Esophagus muscularis mucosa (tissue), 4 donors: ENCODE measurements at regions of chr16 and their contacts with region 1.

Region 1: GRCh38 chr16:68237243-68238028 is 1.5 kb upstream of the ESRP2 start:
- DNase-seq: peak; percentile 100
- H3K4me3 ChIP-seq: peak overlapping the region; percentile 61 to 75 (median 68)
- H3K27ac ChIP-seq: peak overlapping the region; percentile 85 to 89 (median 86)
- H3K4me1 ChIP-seq: peaks cover 24 to 55% (median 36%) of the 10 kb centered on the region in 4 donors
- H3K27me3 ChIP-seq: no peaks in the 10 kb centered on the region
- CTCF ChIP-seq: no peak
- EP300 ChIP-seq: no peak
- POLR2A ChIP-seq: peak; percentile 52

Region 2: DNA sequence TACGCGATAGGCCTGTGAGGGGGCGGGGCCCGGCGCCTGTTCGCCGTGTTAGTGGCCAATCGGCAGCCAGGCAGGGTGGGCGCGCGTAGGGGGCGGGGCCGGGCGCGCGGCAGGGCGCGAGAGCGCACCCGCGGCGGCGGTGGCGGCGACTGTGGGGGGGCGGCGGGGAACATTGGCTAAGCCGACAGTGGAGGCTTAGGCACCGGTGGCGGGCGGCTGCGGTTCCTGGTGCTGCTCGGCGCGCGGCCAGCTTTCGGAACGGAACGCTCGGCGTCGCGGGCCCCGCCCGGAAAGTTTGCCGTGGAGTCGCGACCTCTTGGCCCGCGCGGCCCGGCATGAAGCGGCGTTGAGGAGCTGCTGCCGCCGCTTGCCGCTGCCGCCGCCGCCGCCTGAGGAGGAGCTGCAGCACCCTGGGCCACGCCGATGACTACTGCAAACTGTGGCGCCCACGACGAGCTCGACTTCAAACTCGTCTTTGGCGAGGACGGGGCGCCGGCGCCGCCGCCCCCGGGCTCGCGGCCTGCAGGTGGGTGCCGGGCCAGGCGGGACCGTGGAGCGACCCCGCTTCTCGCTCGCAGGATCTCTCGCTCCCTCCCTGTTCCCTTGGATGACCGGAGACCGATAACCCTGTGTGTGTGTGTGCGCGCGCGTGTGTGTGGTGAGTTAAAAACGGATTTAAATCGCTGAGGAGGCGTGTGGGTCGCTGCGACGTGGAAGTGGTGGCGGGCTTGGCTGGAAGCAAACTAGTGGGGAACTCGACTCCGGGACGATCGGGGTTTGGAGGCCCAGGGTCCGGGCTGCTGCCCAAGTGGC is 152.0 kb before region 1 on chr16 and contains the start of gene NFATC3:
- intact Hi-C with region 1: loop called (anchors 5 kb)
- DNase-seq: peak; percentile 93
- H3K4me3 ChIP-seq: peak within 1 kb of the TSS; percentile 71 to 93 (median 88)
- H3K27ac ChIP-seq: peak within 1 kb of the TSS; percentile 91 to 99 (median 95)
- H3K4me1 ChIP-seq: peaks cover 45 to 82% (median 69%) of the 10 kb centered on the region in 4 donors
- H3K27me3 ChIP-seq: no peaks in the 10 kb centered on the region
- CTCF ChIP-seq: no peak
- EP300 ChIP-seq: no peak
- POLR2A ChIP-seq: peak; percentile 45
- total RNA-seq, gene NFATC3: 44.6 to 56.8 (median 50.8) TPM